Heart left ventricle (tissue), 16 donors: ENCODE measurements at regions of chr1 and their contacts with region 1.

Region 1: DNA sequence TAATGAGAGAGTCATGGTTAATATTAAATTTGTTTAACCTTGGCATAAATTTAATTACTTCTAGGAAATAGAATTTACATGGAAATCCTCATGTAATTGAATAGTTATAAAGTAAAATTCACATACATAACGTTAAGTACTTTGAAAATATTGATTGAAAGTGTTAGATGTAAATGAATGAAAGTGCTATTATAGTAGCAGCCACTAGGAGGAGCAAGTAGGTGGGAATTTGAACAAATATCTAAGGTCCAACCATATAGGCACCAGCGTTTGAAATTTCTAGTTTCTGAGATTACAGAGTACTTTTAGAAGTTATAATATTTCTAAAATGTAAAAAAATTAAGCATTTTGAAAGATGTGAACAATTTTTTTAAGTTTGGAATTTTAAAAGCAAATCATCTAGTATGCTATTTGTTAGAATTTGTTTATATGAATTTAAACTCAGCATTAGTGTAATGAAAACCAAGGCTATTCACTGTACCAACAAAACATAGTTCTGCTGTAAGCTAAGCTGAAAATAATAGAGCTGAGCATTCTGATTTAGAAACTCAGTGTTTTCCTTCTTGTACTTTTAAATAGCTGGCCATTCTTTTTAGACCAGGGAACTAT is 3.3 kb downstream of the B3GALT2 start:
- DNase-seq: no peak
- ATAC-seq: peak in 2 of 4 donors; percentile 45 to 49
- H3K4me3 ChIP-seq: peak overlapping the region in 11 of 12 donors; percentile 16 to 58 (median 51)
- H3K27ac ChIP-seq: peak overlapping the region in 9 of 12 donors; percentile 11 to 78 (median 75)
- H3K4me1 ChIP-seq: peaks cover 0 to 68% (median 29%) of the 10 kb centered on the region in 12 donors
- H3K27me3 ChIP-seq: no peaks in the 10 kb centered on the region
- CTCF ChIP-seq: peak; percentile 76 to 90 (median 86)
- POLR2A ChIP-seq: no peak

Region 2: GRCh38 chr1:193143285-193143684 is 39.8 kb before region 1 on chr1:
- intact Hi-C with region 1: no loop called
- DNase-seq: no peak
- ATAC-seq: no peak
- H3K4me3 ChIP-seq: no peak overlapping the region
- H3K27ac ChIP-seq: peak overlapping the region in 1 of 12 donors; percentile 4
- H3K4me1 ChIP-seq: peaks cover 0 to 18% (median 2%) of the 10 kb centered on the region in 12 donors
- H3K27me3 ChIP-seq: no peaks in the 10 kb centered on the region
- CTCF ChIP-seq: peak in 10 of 12 donors; percentile 17 to 51 (median 34)
- POLR2A ChIP-seq: no peak

Region 3: DNA sequence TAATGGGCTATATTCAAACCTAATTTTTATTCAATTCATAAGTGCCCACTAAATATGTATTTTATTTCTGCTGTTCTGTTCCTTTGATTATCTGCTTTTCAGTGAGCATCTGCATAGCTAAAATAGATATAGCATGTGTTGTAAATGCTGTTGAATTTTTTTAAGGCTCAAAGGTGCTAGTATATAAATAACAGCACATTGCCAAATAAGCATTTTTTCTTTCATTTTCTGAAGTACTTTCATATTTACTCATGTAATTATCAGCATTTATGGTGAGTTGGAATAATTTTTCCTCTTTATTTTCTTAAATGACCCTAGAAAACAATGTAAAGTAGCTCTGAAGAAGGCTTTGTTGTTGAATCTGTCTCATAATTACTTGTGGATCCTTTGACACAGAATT is 72.9 kb after region 1 on chr1:
- intact Hi-C with region 1: no loop called
- DNase-seq: no peak
- ATAC-seq: no peak
- H3K4me3 ChIP-seq: no peak overlapping the region
- H3K27ac ChIP-seq: no peak overlapping the region
- H3K4me1 ChIP-seq: peaks cover 0 to 12% (median 0%) of the 10 kb centered on the region in 12 donors
- H3K27me3 ChIP-seq: no peaks in the 10 kb centered on the region
- CTCF ChIP-seq: no peak
- POLR2A ChIP-seq: no peak

Region 4: GRCh38 chr1:193348091-193348768 is 165.1 kb after region 1 on chr1:
- intact Hi-C with region 1: loop called in 1 of 10 experiments (anchors 5 kb)
- DNase-seq: no peak
- ATAC-seq: no peak
- H3K4me3 ChIP-seq: no peak overlapping the region
- H3K27ac ChIP-seq: no peak overlapping the region
- H3K4me1 ChIP-seq: peaks cover 0 to 6% (median 0%) of the 10 kb centered on the region in 12 donors
- H3K27me3 ChIP-seq: no peaks in the 10 kb centered on the region
- CTCF ChIP-seq: no peak
- POLR2A ChIP-seq: no peak

Region 5: GRCh38 chr1:193589597-193590040 is 406.5 kb after region 1 on chr1:
- intact Hi-C with region 1: loop called in 2 of 10 experiments (anchors 5 to 10 kb)
- DNase-seq: peak in 3 of 5 donors; percentile 19 to 31 (median 19)
- ATAC-seq: peak; percentile 77 to 87 (median 82)
- H3K4me3 ChIP-seq: peak overlapping the region in 2 of 12 donors; percentile 3 to 13
- H3K27ac ChIP-seq: peak overlapping the region in 10 of 12 donors; percentile 3 to 67 (median 41)
- H3K4me1 ChIP-seq: peaks cover 0 to 49% (median 18%) of the 10 kb centered on the region in 12 donors
- H3K27me3 ChIP-seq: no peaks in the 10 kb centered on the region
- CTCF ChIP-seq: no peak
- POLR2A ChIP-seq: no peak

Region 6: GRCh38 chr1:194069168-194069830 is 886.2 kb after region 1 on chr1:
- intact Hi-C with region 1: loop called in 3 of 10 experiments (anchors 1 to 10 kb)
- DNase-seq: peak; percentile 81 to 90 (median 86)
- ATAC-seq: peak; percentile 94 to 98 (median 96)
- H3K4me3 ChIP-seq: no peak overlapping the region
- H3K27ac ChIP-seq: peak overlapping the region; percentile 39 to 94 (median 80)
- H3K4me1 ChIP-seq: peaks cover 0 to 28% (median 2%) of the 10 kb centered on the region in 12 donors
- H3K27me3 ChIP-seq: no peaks in the 10 kb centered on the region
- CTCF ChIP-seq: no peak
- POLR2A ChIP-seq: no peak

Region 7: GRCh38 chr1:194295685-194296084 is 1112.6 kb after region 1 on chr1:
- intact Hi-C with region 1: loop called in 6 of 10 experiments (anchors 10 kb)
- DNase-seq: no peak
- ATAC-seq: peak; percentile 71 to 86 (median 80)
- H3K4me3 ChIP-seq: no peak overlapping the region
- H3K27ac ChIP-seq: no peak overlapping the region
- H3K4me1 ChIP-seq: no peaks in the 10 kb centered on the region
- H3K27me3 ChIP-seq: no peaks in the 10 kb centered on the region
- CTCF ChIP-seq: peak; percentile 41 to 63 (median 53)
- POLR2A ChIP-seq: no peak